Activated CD8-positive, alpha-beta T cell treated with anti-CD3 and anti-CD28 coated beads for 36 hours (primary cell): ENCODE measurements at regions of chr11 and their contacts with region 1.

Region 1: DNA sequence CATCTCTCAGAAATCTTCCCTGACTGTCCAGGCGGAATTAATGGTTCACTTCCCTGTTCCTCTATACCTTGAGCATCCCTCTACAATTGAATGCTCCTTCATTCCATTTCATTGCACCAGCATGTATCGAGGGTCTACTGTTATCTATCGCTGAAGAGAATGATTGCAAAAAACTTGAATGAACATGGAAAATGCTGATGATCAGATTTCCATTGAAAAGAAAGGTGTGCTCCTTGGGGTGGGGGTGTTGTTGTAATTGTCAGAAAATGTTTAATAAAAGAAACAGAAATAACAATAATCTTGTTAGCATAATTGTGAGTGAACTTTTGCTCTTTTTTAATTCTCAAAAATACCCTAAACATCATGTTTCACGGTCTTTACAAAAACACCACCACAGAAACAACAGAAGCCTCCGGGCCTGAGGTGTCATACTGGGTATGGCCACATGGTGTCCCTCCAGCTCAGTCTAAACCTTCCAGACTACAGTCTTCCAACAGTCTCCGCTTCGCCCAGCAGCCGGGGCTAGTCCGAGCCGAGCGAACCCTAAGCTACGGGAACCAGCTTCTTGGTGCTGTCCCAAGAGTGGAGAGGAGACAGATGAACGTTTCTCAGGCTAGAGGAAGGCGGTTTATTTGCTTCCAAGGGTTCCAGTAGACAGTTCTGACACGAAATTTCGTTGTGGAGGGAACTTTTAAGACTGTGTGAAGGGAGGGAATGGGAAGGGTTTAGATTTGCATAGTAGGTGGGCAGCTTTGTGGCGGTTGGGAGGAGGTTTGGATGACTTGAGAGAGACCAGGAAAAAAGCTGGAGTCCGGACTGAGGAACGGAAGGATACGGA is 75.8 kb upstream of the ZBED5 start:
- DNase-seq: peak; percentile 91
- ATAC-seq: peak; percentile 93
- H3K4me3 Mint-ChIP-seq: peak overlapping the region; percentile 72
- H3K27ac Mint-ChIP-seq: no peak overlapping the region
- H3K4me1 Mint-ChIP-seq: peaks cover 8% of the 10 kb centered on the region
- H3K27me3 Mint-ChIP-seq: peaks cover 31% of the 10 kb centered on the region
- CTCF ChIP-seq: peak; percentile 94

Region 2: DNA sequence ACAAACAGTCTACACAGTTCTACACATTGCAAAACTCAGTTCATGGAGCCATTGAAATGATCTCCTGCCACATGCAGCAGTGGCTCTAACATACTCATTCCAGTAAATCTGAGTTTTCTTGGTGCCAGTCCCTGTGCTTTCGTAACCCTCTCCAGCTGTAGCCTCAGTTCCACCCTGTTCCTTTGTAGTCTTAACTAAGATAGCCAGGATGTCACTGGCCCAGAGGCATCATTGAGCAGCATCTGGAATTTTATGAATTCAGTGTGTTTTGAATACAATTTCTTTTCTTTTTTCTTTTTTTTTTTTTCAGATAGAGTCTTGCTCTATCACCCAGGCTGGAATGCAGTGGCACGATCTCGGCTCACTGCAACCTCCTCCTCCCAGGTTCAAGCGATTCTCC is 38.3 kb before region 1 on chr11:
- CTCF ChIA-PET with region 1: no interaction called
- POLR2A ChIA-PET with region 1: no interaction called
- intact Hi-C with region 1: no loop called
- DNase-seq: no peak
- ATAC-seq: no peak
- H3K4me3 Mint-ChIP-seq: no peak overlapping the region
- H3K27ac Mint-ChIP-seq: no peak overlapping the region
- H3K4me1 Mint-ChIP-seq: peaks cover 21% of the 10 kb centered on the region
- H3K27me3 Mint-ChIP-seq: no peaks in the 10 kb centered on the region
- CTCF ChIP-seq: no peak

Region 3: DNA sequence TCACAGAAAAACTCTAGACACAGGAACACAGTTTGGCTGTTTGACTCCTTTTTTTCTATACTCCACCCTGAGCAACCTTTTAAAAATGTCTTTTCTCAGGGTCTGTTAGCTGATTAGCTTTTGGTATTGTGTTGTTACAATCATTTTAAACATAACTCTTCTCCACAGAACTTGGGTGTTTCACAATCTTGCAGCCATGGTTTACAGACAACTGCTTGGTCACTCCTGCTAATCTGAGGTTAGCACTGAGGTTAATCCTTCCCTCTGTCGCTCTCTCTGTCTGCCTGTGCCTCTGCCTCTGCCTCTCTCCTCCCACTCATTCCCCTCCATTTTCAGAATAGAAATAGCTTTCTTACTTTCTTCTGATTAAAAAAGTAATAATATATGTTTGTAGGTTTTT is 13.5 kb before region 1 on chr11:
- CTCF ChIA-PET with region 1: interaction called, 13 read pairs
- POLR2A ChIA-PET with region 1: no interaction called
- intact Hi-C with region 1: no loop called
- DNase-seq: no peak
- ATAC-seq: no peak
- H3K4me3 Mint-ChIP-seq: no peak overlapping the region
- H3K27ac Mint-ChIP-seq: no peak overlapping the region
- H3K4me1 Mint-ChIP-seq: peaks cover 2% of the 10 kb centered on the region
- H3K27me3 Mint-ChIP-seq: no peaks in the 10 kb centered on the region
- CTCF ChIP-seq: no peak

Region 4: DNA sequence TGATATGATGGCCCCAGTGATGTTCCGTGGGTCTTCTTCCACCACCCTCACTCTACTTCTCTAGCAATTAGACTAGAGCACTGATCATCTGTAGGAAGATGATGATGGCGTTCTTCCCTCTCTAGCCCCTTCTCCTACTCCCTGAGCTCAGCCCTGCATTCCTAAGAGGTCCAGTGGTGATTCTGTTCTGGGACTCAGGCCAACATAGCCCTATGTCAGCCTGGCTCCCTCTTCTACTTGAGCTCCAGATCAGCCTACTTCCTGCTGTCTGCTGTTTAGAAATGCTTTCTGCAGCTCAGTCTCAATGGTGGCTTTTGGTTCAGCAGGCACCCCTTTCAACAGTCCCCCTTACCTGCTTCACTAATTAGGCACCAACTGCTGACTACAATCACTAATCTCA is 10.3 kb after region 1 on chr11:
- CTCF ChIA-PET with region 1: interaction called, 32 read pairs
- POLR2A ChIA-PET with region 1: no interaction called
- intact Hi-C with region 1: no loop called
- DNase-seq: no peak
- ATAC-seq: no peak
- H3K4me3 Mint-ChIP-seq: no peak overlapping the region
- H3K27ac Mint-ChIP-seq: no peak overlapping the region
- H3K4me1 Mint-ChIP-seq: peaks cover 3% of the 10 kb centered on the region
- H3K27me3 Mint-ChIP-seq: no peaks in the 10 kb centered on the region
- CTCF ChIP-seq: no peak

Region 5: GRCh38 chr11:11022125-11022730 is 88.6 kb after region 1 on chr11:
- CTCF ChIA-PET with region 1: interaction called, 82 read pairs
- POLR2A ChIA-PET with region 1: no interaction called
- intact Hi-C with region 1: loop called (anchors 1 kb)
- DNase-seq: peak; percentile 34
- ATAC-seq: no peak
- H3K4me3 Mint-ChIP-seq: no peak overlapping the region
- H3K27ac Mint-ChIP-seq: no peak overlapping the region
- H3K4me1 Mint-ChIP-seq: no peaks in the 10 kb centered on the region
- H3K27me3 Mint-ChIP-seq: no peaks in the 10 kb centered on the region
- CTCF ChIP-seq: no peak

Region 6: DNA sequence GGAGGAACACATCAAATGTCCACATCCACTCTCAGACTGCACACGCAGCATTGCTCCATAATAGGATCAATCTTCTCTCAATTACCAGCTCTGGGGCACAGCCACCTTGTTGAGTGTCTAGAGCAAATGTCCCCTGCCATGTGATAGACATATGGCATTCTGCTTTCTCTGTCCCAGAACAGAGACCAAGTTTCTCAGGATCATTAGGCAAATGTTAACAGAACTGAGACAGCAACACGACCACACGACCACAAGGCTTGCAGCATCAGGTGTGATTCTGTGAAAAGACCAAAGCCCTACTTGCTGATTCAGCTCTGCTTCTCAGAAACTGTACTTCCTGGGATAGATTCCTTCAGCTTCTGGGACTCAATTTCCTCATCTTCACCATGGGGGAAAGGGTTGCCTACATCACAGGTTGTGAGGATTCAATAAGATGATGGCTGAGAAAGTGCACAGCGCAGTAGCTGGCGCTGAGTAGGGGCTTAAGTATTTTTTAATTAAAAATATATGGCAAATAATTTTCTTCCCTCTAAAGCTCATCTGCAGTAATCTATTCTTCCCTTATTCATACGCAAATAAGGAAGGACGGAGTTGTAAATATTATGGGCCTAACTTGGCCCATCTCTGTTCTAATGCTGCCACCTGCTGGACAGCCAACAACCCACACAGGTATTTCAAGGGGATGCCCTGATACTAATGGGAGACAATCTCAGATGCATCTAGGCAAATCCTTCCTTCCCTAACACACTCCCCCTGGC is 853.8 kb after region 1 on chr11:
- CTCF ChIA-PET with region 1: interaction called, 4 read pairs
- POLR2A ChIA-PET with region 1: no interaction called
- intact Hi-C with region 1: loop called (anchors 10 kb)
- DNase-seq: peak; percentile 76
- ATAC-seq: peak; percentile 82
- H3K4me3 Mint-ChIP-seq: no peak overlapping the region
- H3K27ac Mint-ChIP-seq: no peak overlapping the region
- H3K4me1 Mint-ChIP-seq: no peaks in the 10 kb centered on the region
- H3K27me3 Mint-ChIP-seq: no peaks in the 10 kb centered on the region
- CTCF ChIP-seq: peak; percentile 92